Mammary epithelial cell (primary cell): ENCODE measurements at regions of chr3 and their contacts with region 1.

Region 1: DNA sequence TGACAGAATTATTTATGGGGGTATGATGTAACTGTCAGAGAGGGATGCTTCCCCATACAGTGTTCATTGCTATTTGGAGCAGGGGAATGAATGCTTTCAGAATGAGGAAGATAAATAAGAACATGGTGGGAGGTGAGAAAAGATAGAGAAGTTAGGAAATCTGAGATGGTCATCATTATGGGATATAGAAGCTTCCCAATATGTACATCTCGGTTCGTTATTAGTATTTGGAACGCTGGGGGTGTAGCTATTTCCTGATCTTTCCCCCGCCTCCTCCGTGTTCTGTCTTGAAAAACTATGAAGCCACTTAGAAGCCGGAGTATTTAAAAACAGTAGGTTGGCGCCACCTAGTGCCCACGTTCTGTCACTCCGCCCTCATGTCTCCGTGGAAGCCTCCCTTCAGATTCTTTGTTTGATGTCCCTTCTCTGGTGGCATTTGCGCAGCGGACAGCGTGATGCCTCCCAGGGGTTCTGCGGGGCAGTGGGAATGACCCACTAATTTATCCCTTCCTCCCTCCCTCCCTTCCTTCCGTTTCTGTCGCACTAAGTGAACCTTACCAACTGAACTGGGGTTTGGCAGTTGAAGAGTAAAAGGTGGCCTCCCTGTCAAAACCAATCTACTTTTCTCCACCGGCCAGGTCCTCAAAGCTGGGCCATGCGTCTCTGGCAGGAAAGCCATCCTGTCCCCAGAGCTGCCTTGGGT is 184.5 kb downstream of the FEZF2 start:
- DNase-seq: peak; percentile 45
- H3K4me3 ChIP-seq: no peak overlapping the region
- H3K27ac ChIP-seq: no peak overlapping the region
- H3K4me1 ChIP-seq: no peaks in the 10 kb centered on the region
- H3K27me3 ChIP-seq: no peaks in the 10 kb centered on the region
- CTCF ChIP-seq: peak; percentile 67 to 77

Region 2: DNA sequence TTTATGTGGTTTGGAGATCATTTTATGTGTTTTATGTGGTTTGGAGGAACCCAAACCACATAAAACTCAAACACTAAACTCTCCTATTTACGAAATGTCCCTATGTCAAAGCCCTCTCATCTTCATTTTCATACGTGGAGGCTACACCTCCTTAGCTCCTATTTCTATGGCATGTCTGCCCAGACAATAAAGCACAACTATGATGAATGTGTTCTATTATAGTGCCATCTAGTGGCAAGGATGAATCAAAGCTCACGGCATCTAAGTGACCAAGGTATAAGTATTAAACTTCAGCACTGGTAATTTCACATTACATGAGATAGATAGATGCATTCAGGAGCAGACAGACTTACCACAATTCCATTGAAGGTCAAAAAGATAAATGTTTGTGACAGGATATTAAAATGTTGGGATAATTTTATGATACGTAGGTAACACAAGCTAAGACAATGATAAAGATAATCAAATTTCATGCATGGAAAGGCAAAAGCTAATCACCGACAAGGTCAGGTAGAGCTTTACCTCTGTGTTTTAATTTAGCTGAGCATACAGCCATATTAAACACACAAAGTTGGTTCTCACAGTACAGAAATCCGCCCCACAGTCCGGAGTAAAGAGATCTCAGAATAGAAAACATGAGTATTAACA is 807.0 kb before region 1 on chr3:
- CTCF ChIA-PET with region 1: no interaction called
- dilution Hi-C with region 1: no loop called
- in situ Hi-C with region 1: no loop called
- intact Hi-C with region 1: loop called (anchors 10 kb)
- DNase-seq: peak; percentile 27
- H3K4me3 ChIP-seq: no peak overlapping the region
- H3K27ac ChIP-seq: no peak overlapping the region
- H3K4me1 ChIP-seq: no peaks in the 10 kb centered on the region
- H3K27me3 ChIP-seq: no peaks in the 10 kb centered on the region
- CTCF ChIP-seq: peak; percentile 57 to 74

Region 3: GRCh38 chr3:61858056-61858455 is 330.8 kb before region 1 on chr3:
- CTCF ChIA-PET with region 1: interaction called, 6 read pairs
- dilution Hi-C with region 1: no loop called
- in situ Hi-C with region 1: loop called (anchors 10 to 25 kb)
- intact Hi-C with region 1: loop called (anchors 1 kb)
- DNase-seq: peak; percentile 12
- H3K4me3 ChIP-seq: no peak overlapping the region
- H3K27ac ChIP-seq: no peak overlapping the region
- H3K4me1 ChIP-seq: no peaks in the 10 kb centered on the region
- H3K27me3 ChIP-seq: no peaks in the 10 kb centered on the region
- CTCF ChIP-seq: peak; percentile 10 to 61

Region 4: DNA sequence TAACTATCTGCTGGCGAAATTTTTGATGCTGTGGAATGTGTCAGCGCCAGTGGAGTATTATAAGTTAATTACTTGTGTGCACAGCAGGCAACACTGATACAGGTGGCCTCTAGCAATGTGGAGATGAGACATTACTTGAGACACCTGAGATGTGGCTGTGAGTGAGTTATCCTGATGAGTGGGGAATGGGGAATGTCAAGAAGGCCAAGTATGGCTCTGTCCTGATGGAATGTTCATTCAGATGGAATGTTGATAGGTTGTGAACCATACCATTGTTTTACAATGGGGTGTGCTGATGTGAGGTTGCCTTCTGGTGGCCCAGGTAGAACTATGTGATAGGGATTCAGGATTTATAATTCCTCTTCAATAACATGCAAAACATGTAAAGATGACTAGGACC is 222.6 kb before region 1 on chr3:
- CTCF ChIA-PET with region 1: no interaction called
- dilution Hi-C with region 1: no loop called
- in situ Hi-C with region 1: no loop called
- intact Hi-C with region 1: loop called (anchors 5 kb)
- DNase-seq: peak; percentile 83
- H3K4me3 ChIP-seq: no peak overlapping the region
- H3K27ac ChIP-seq: no peak overlapping the region
- H3K4me1 ChIP-seq: peaks cover 29% of the 10 kb centered on the region
- H3K27me3 ChIP-seq: no peaks in the 10 kb centered on the region
- CTCF ChIP-seq: no peak